K562 (cell line): ENCODE measurements at regions of chr6 and their contacts with region 1.

Region 1: DNA sequence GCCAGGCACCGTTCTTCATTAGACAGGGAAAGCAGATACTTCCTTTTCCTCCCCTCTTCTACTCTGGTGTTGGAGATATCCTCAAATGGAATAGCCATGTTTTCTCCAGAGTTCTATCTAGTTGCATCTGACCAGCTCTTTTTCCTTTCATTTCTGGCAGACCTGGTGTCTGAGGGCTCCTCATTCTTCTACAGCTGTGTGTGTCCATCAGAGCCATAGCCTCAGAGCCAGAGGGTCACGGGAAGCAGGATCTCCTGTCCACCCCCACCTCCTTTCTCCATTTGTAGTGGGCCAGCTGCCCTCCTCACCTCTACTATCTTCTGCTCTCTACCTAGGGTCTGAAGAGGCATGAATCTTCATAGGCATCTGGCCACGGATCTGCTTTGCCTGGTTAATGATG is 57.0 kb downstream of the TSPYL4 start:
- DNase-seq: no peak
- ATAC-seq: no peak
- H3K4me3 ChIP-seq: no peak overlapping the region
- H3K27ac ChIP-seq: no peak overlapping the region
- H3K4me1 ChIP-seq: no peaks in the 10 kb centered on the region
- H3K27me3 ChIP-seq: no peaks in the 10 kb centered on the region
- CTCF ChIP-seq: no peak
- EP300 ChIP-seq: no peak
- POLR2A ChIP-seq: no peak
- RAD21 ChIP-seq: no peak

Region 2: GRCh38 chr6:116073765-116074419 is 122.9 kb before region 1 on chr6:
- CTCF ChIA-PET with region 1: no interaction called
- POLR2A ChIA-PET with region 1: no interaction called
- in situ Hi-C with region 1: no loop called
- intact Hi-C with region 1: no loop called
- DNase-seq: no peak
- ATAC-seq: no peak
- H3K4me3 ChIP-seq: no peak overlapping the region
- H3K27ac ChIP-seq: no peak overlapping the region
- H3K4me1 ChIP-seq: no peaks in the 10 kb centered on the region
- H3K27me3 ChIP-seq: no peaks in the 10 kb centered on the region
- CTCF ChIP-seq: no peak
- EP300 ChIP-seq: no peak
- POLR2A ChIP-seq: no peak
- RAD21 ChIP-seq: no peak

Region 3: DNA sequence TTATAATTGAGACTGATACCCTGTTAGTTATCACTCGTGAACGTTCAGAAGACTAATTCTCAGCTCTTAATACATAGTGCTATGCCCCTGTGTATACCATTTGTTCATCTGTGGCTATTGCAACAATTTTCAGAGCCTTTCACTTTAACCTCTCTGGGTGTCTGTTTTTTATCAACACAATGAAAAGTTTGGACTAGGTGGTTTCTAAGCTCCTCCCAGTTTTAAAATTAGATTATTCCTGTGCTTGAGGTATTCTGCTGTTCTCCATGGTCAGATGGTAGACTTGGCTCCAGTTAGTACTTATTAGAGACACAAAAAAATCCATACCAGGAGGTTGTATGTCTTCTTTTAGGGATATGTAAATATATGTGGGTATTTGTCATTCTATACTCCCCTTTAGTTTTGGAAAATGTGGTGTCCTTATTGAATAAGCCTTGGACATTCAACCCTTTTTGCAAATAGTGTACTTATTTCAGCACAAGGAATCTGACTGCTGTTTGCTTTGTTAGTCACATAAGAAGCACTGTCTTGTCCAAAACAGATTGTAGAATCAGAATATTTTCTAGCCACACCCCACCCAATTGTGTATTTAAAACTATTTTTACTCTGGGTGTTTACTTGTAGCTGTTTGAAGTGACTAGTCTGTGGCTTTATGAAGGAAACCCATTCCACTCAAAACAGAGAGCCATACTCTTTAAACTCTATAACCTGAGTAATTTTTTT is 68.9 kb before region 1 on chr6:
- CTCF ChIA-PET with region 1: no interaction called
- POLR2A ChIA-PET with region 1: no interaction called
- in situ Hi-C with region 1: no loop called
- intact Hi-C with region 1: loop called (anchors 5 kb)
- DNase-seq: no peak
- ATAC-seq: no peak
- H3K4me3 ChIP-seq: no peak overlapping the region
- H3K27ac ChIP-seq: no peak overlapping the region
- H3K4me1 ChIP-seq: no peaks in the 10 kb centered on the region
- H3K27me3 ChIP-seq: no peaks in the 10 kb centered on the region
- CTCF ChIP-seq: no peak
- EP300 ChIP-seq: no peak
- POLR2A ChIP-seq: no peak
- RAD21 ChIP-seq: no peak